Esophagus squamous epithelium (tissue), 5 donors: ENCODE measurements at regions of chr19 and their contacts with region 1.

Region 1: GRCh38 chr19:3075895-3076431 is 13.7 kb upstream of the TLE5 start:
- DNase-seq: no peak
- H3K4me3 ChIP-seq: peak overlapping the region in 1 of 4 donors; percentile 47
- H3K27ac ChIP-seq: peak overlapping the region in 1 of 4 donors; percentile 6
- H3K4me1 ChIP-seq: peaks cover 0 to 25% (median 17%) of the 10 kb centered on the region in 3 donors
- H3K27me3 ChIP-seq: no peaks in the 10 kb centered on the region
- CTCF ChIP-seq: peak; percentile 91 to 98 (median 96)
- POLR2A ChIP-seq: no peak

Region 2: DNA sequence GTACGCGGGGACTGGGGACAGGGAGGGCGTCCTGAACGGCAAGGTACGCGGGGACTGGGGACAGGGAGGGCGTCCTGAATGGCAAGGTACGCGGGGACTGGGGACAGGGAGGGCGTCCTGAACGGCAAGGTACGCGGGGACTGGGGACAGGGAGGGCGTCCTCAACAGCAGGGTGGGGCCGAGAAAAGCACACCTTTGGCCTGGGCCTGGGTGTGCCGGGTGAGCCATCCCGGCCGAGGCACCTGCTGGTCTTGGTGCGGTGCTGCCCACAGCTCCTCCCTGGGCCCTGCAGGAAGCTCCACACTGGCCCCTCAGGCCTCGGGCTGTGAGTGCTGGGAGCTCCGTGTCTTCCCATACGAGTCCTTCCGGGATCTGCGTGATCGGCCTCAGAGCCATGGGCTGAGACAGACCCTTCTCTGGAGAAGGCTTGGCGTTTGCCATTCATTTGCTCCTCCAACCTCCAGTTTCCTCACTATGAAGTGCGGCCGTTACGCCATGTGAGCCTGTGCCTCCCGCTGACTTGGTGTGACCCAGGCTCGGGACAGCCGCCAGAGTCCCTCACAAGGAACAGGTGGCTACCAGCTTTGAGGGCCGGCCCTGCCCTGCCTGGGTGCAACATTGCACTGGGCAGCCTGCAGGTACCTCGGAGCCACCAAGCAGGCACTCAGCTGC is 264.1 kb before region 1 on chr19:
- intact Hi-C with region 1: no loop called
- DNase-seq: no peak
- H3K4me3 ChIP-seq: no peak overlapping the region
- H3K27ac ChIP-seq: no peak overlapping the region
- H3K4me1 ChIP-seq: no peaks in the 10 kb centered on the region
- H3K27me3 ChIP-seq: no peaks in the 10 kb centered on the region
- CTCF ChIP-seq: no peak
- POLR2A ChIP-seq: no peak

Region 3: GRCh38 chr19:2962045-2962561 is 113.9 kb before region 1 on chr19:
- intact Hi-C with region 1: loop called (anchors 10 kb)
- DNase-seq: no peak
- H3K4me3 ChIP-seq: no peak overlapping the region
- H3K27ac ChIP-seq: peak overlapping the region in 1 of 4 donors; percentile 17
- H3K4me1 ChIP-seq: peaks cover 0 to 14% (median 0%) of the 10 kb centered on the region in 3 donors
- H3K27me3 ChIP-seq: no peaks in the 10 kb centered on the region
- CTCF ChIP-seq: peak; percentile 54 to 92 (median 88)
- POLR2A ChIP-seq: no peak

Region 4: GRCh38 chr19:3006075-3006767 is 69.7 kb before region 1 on chr19:
- intact Hi-C with region 1: no loop called
- DNase-seq: no peak
- H3K4me3 ChIP-seq: no peak overlapping the region
- H3K27ac ChIP-seq: no peak overlapping the region
- H3K4me1 ChIP-seq: peaks cover 0 to 6% (median 0%) of the 10 kb centered on the region in 3 donors
- H3K27me3 ChIP-seq: no peaks in the 10 kb centered on the region
- CTCF ChIP-seq: no peak
- POLR2A ChIP-seq: no peak

Region 5: DNA sequence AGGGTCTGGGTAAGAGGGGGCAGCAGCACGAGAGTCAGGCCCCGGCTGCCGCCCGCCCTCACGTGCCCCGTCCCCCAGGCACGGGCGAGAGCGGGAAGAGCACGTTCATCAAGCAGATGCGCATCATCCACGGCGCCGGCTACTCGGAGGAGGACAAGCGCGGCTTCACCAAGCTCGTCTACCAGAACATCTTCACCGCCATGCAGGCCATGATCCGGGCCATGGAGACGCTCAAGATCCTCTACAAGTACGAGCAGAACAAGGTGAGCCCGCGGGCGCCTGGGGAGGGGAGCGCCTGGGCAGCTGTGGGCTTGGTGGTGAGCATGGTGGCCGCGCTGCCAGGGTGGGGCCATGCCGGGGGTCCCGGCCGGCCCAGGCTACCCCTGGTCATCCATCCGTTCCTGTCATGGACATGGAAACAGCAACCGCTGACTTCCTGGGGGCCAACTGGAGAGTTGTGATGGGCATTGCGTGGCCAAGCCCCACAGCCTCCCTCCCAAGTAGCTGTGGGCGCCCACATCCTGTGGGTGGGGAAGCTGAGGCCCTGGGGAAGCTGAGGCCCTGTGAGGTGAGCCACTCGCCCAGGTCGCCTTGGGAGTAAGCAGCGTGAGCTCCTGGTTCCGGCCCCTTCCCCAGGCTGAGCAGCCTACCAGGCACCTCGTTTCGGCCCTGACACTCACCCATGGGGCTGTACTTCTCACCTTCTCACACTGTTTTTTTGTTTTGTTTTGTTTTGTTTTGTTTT is 34.3 kb after region 1 on chr19:
- intact Hi-C with region 1: loop called (anchors 5 kb)
- DNase-seq: no peak
- H3K4me3 ChIP-seq: no peak overlapping the region
- H3K27ac ChIP-seq: no peak overlapping the region
- H3K4me1 ChIP-seq: peaks cover 0 to 37% (median 5%) of the 10 kb centered on the region in 3 donors
- H3K27me3 ChIP-seq: no peaks in the 10 kb centered on the region
- CTCF ChIP-seq: no peak
- POLR2A ChIP-seq: no peak

Region 6: GRCh38 chr19:3163230-3163886 is 87.4 kb after region 1 on chr19:
- intact Hi-C with region 1: loop called (anchors 5 kb)
- DNase-seq: no peak
- H3K4me3 ChIP-seq: no peak overlapping the region
- H3K27ac ChIP-seq: no peak overlapping the region
- H3K4me1 ChIP-seq: peaks cover 0 to 14% (median 0%) of the 10 kb centered on the region in 3 donors
- H3K27me3 ChIP-seq: no peaks in the 10 kb centered on the region
- CTCF ChIP-seq: peak; percentile 75 to 94 (median 86)
- POLR2A ChIP-seq: no peak

Region 7: DNA sequence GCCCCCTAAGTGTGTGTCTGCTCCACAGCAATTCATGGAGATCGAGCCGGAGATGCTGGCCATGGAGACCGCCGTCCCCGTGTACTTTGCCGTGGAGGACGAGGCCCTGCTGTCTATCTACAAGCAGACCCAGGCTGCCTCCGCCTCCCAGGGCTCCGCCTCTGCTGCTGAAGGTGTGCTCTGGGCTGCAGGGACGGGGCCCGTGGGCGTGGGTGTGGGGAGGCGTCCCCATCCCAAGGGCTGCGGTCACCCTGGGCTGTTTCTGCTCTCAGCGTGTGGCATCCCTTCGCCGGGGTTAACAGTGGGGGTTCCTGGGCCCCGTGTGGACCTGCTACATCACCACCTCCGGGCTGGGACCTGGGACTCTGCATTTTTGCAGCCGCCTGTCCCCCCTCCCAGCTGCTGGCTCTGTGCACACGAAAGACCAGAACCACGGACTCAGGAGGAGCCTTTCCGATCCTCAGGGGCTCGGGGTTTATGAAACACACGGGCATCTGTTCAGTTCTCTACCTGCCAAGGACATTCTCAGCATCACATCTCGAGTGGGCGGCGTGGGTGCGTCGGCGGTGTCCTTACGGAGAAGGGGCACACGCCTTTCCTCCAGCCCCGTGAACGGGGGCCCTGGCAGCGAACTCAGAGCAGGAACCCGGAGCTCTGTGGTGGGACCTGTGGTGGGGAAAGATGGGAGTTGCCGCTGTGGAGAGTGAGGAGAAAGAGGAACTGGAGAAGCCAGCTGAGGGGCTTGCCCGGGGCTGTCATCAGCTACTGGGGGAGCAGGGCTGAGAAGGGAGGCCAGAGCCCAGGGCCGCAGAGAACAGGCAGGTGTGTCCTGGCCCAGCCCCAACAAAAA is 117.5 kb after region 1 on chr19:
- intact Hi-C with region 1: no loop called
- DNase-seq: no peak
- H3K4me3 ChIP-seq: no peak overlapping the region
- H3K27ac ChIP-seq: no peak overlapping the region
- H3K4me1 ChIP-seq: peaks cover 0 to 17% (median 0%) of the 10 kb centered on the region in 3 donors
- H3K27me3 ChIP-seq: no peaks in the 10 kb centered on the region
- CTCF ChIP-seq: no peak
- POLR2A ChIP-seq: no peak